ENCODE measurements at regions of chr3 and their contacts with region 1.

Region 1: GRCh38 chr3:14402304-14402811 is at the start of gene SLC6A6:
- DNase-seq: peak; percentile 95
- H3K4me3 Mint-ChIP-seq: peak within 1 kb of the TSS; percentile 99
- H3K27ac Mint-ChIP-seq: peak within 1 kb of the TSS; percentile 97
- H3K4me1 Mint-ChIP-seq: peaks cover 34% of the 10 kb centered on the region
- H3K27me3 Mint-ChIP-seq: no peaks in the 10 kb centered on the region
- total RNA-seq, gene SLC6A6: 44.0 to 45.1 TPM

Region 2: DNA sequence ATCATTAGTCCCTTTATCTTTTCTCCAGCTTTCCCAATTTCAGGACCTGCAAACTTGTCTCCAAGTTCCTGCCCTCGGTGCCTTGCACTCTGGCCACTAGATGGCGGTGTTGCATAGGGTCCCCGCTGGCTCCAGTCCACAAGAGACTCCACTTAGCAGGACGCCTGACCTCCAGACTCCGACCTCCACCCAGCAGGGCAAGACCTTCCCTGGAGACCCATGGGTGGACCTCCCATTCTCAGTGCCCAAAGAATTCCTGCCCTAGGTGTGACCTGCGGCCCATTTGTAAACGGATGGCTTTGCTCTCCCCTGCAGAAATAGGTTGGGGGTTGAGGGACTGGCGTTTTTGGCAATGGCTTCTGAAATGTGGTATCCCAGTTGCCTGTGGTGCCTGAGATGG is 141.1 kb before region 1 on chr3:
- CTCF ChIA-PET with region 1: interaction called, 3 read pairs
- POLR2A ChIA-PET with region 1: no interaction called
- intact Hi-C with region 1: loop called (anchors 1 kb)
- DNase-seq: peak; percentile 83
- H3K4me3 Mint-ChIP-seq: no peak overlapping the region
- H3K27ac Mint-ChIP-seq: no peak overlapping the region
- H3K4me1 Mint-ChIP-seq: no peaks in the 10 kb centered on the region
- H3K27me3 Mint-ChIP-seq: peaks cover 16% of the 10 kb centered on the region

Region 3: DNA sequence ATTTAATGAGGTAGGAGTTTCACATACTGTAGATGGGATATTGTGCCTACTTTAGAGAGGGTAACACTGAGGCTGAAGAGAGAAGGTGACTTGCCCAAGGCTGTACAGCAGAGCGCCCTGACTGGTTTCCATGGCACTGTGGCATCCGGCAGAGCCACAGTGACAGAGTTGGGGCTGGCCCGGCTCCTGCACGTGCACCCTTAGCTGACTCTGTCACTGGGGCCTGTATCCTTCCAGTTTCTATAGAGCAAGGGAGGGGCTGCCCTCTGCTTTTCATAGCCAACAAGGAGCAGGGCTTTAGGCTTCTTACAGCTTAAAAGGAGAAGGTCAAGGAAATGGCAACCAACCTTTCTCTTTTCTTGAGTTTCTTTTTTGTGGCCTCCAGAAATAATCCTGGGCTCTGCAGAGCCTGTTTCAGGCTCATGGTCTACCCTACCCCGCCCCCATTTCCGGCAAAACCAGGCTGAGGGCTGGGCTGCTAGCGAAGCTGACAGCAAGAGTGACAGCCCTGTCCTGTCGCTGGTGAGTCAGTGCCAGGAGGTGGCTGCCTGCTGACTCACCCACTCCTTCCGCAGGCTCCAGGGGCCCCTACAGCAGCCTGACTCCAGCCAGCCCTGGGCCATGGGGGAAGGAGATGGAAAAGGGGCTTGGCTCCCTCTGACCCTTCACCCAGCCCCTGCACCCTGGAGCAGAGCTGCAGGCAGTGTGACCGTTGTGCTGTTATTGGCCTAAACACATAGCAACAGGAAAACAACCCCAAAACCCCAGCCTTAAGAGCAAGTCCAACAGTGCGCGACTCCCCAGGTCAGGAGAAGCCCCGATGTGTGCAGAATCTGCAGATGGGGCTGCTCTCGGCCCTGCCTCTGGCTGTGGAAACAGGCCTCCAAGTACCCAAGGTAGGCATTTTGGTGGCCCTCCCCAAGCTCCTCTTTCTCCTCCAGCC is 29.8 kb after region 1 on chr3:
- CTCF ChIA-PET with region 1: interaction called, 18 read pairs
- POLR2A ChIA-PET with region 1: interaction called, 50 read pairs
- intact Hi-C with region 1: loop called (anchors 1 kb)
- DNase-seq: peak; percentile 97
- H3K4me3 Mint-ChIP-seq: peak overlapping the region; percentile 77
- H3K27ac Mint-ChIP-seq: peak overlapping the region; percentile 92
- H3K4me1 Mint-ChIP-seq: peaks cover 80% of the 10 kb centered on the region
- H3K27me3 Mint-ChIP-seq: no peaks in the 10 kb centered on the region

Region 4: GRCh38 chr3:14467814-14468620 is 65.7 kb after region 1 on chr3:
- CTCF ChIA-PET with region 1: interaction called, 21 read pairs
- POLR2A ChIA-PET with region 1: interaction called, 7 read pairs
- intact Hi-C with region 1: no loop called
- DNase-seq: peak; percentile 49
- H3K4me3 Mint-ChIP-seq: no peak overlapping the region
- H3K27ac Mint-ChIP-seq: no peak overlapping the region
- H3K4me1 Mint-ChIP-seq: peaks cover 4% of the 10 kb centered on the region
- H3K27me3 Mint-ChIP-seq: no peaks in the 10 kb centered on the region

Region 5: GRCh38 chr3:14947886-14948555 is 545.7 kb after region 1 on chr3:
- CTCF ChIA-PET with region 1: no interaction called
- POLR2A ChIA-PET with region 1: no interaction called
- intact Hi-C with region 1: loop called (anchors 5 kb)
- DNase-seq: peak; percentile 97
- H3K4me3 Mint-ChIP-seq: peak overlapping the region; percentile 96
- H3K27ac Mint-ChIP-seq: peak overlapping the region; percentile 99
- H3K4me1 Mint-ChIP-seq: peaks cover 50% of the 10 kb centered on the region
- H3K27me3 Mint-ChIP-seq: no peaks in the 10 kb centered on the region

Measured in activated CD4-positive, alpha-beta memory T cell treated with anti-CD3 and anti-CD28 coated beads for 36 hours (primary cell).